ENCODE measurements at regions of chr19 and their contacts with region 1.

Region 1: DNA sequence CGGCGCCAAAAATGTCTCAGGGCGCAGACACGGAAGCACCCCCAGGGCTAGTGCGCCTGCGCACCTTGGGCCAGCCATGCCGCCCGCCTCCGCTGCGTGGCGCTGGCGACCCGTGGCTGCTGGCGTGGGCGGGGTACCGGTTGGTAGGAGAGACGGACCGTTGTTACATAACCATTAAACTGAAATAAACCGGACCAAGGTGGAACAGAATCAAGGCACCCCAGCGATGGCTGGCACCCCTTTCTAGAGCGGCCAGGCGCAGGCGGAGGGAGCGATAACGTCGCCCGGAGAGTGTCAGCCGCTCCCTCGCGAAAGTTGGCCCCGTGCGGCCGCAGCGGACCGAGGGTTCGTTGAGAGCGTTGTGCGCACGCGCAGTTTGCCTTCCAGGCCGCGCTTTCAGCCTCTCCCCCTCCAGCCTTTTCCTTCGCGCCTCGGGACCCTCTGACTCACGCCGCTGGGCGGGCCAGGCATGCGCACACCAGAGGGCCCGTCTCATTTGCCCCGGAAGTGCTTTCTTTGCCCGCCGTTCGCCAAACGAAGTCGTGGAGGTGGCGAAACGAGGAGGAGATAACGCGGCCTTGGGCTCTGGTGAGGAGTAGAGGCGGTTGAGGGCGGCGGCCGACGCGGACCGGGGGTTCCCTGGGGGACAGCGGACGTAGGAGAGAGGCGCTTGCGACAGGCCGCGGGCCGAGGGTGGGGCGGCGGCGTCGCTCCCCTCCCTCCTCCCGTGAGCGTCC is at the starts of genes PLEKHJ1 and SF3A2:
- DNase-seq: peak; percentile 99
- ATAC-seq: peak; percentile 87
- H3K4me3 Mint-ChIP-seq: peak within 1 kb of the TSS; percentile 94
- H3K27ac Mint-ChIP-seq: peak within 1 kb of the TSS; percentile 97
- H3K4me1 Mint-ChIP-seq: peaks cover 52% of the 10 kb centered on the region
- H3K27me3 Mint-ChIP-seq: no peaks in the 10 kb centered on the region
- total RNA-seq, gene PLEKHJ1: 38.4 to 61.8 TPM
- total RNA-seq, gene SF3A2: 146 to 192 TPM

Region 2: GRCh38 chr19:1406774-1407499 is 829.5 kb before region 1 on chr19:
- CTCF ChIA-PET with region 1: no interaction called
- POLR2A ChIA-PET with region 1: no interaction called
- intact Hi-C with region 1: loop called in 1 of 2 experiments (anchors 1 kb)
- DNase-seq: peak; percentile 99
- ATAC-seq: peak; percentile 83
- H3K4me3 Mint-ChIP-seq: peak overlapping the region; percentile 65
- H3K27ac Mint-ChIP-seq: peak overlapping the region; percentile 72
- H3K4me1 Mint-ChIP-seq: peaks cover 43% of the 10 kb centered on the region
- H3K27me3 Mint-ChIP-seq: peaks cover 2% of the 10 kb centered on the region

Region 3: DNA sequence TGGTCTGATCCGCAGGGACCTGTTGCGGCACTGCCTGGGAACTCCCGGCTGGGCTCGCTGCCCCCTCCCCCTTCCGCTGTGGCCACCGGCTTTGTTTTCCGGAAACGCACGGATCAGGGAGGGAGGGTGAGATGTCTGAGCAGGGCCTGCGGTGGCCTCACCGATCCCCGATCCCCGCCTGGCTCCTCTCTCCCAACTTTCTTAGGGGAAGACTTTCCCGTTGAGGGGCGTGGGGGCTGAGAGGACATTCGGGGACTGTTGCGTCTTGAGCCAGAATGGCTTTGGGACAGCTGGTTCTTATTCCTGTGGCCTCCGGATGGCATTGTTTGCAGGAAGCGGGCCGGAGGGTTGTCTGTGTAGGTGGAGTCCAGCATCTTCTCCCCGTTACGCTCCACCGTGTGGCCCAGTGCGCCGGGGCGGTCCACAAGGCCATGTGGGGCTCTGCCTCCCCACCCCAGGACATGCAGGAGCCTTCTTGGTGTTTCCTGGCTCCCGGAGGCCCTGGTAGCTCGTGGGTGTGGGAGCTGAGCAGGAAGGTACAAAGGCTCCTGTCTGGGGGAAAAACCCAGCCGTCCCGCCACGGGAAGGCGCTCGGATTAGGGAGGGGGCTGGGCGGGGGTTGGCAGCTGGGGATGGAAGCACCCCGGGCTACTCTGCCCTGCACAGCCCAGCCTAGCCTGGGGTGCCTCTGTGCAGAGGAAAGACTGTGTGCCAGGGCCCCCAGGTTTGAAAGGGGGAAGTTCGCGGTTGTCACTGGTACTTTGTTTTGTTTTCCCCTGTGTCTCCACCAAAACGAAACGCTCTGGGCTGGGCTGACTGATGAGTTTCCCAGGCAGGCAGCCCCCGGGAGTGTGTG is 294.2 kb before region 1 on chr19:
- CTCF ChIA-PET with region 1: interaction called, 3 read pairs
- POLR2A ChIA-PET with region 1: no interaction called
- intact Hi-C with region 1: loop called in 1 of 2 experiments (anchors 1 kb)
- DNase-seq: peak; percentile 85
- ATAC-seq: peak; percentile 50
- H3K4me3 Mint-ChIP-seq: peak overlapping the region; percentile 93
- H3K27ac Mint-ChIP-seq: peak overlapping the region; percentile 88
- H3K4me1 Mint-ChIP-seq: peaks cover 30% of the 10 kb centered on the region
- H3K27me3 Mint-ChIP-seq: no peaks in the 10 kb centered on the region

Region 4: GRCh38 chr19:2253106-2254053 is 16.9 kb after region 1 on chr19:
- CTCF ChIA-PET with region 1: interaction called, 52 read pairs
- POLR2A ChIA-PET with region 1: interaction called, 11 read pairs
- intact Hi-C with region 1: loop called (anchors 1 kb)
- DNase-seq: peak; percentile 69
- ATAC-seq: peak; percentile 23
- H3K4me3 Mint-ChIP-seq: peak overlapping the region; percentile 49
- H3K27ac Mint-ChIP-seq: no peak overlapping the region
- H3K4me1 Mint-ChIP-seq: peaks cover 24% of the 10 kb centered on the region
- H3K27me3 Mint-ChIP-seq: peaks cover 4% of the 10 kb centered on the region

Region 5: GRCh38 chr19:2391118-2391725 is 154.7 kb after region 1 on chr19:
- CTCF ChIA-PET with region 1: interaction called, 6 read pairs
- POLR2A ChIA-PET with region 1: no interaction called
- intact Hi-C with region 1: loop called (anchors 1 to 2 kb)
- DNase-seq: peak; percentile 57
- ATAC-seq: peak; percentile 80
- H3K4me3 Mint-ChIP-seq: no peak overlapping the region
- H3K27ac Mint-ChIP-seq: no peak overlapping the region
- H3K4me1 Mint-ChIP-seq: peaks cover 2% of the 10 kb centered on the region
- H3K27me3 Mint-ChIP-seq: peaks cover 2% of the 10 kb centered on the region

Region 6: GRCh38 chr19:2636897-2637683 is 400.6 kb after region 1 on chr19:
- CTCF ChIA-PET with region 1: no interaction called
- POLR2A ChIA-PET with region 1: no interaction called
- intact Hi-C with region 1: loop called in 1 of 2 experiments (anchors 1 kb)
- DNase-seq: peak; percentile 87
- ATAC-seq: peak; percentile 81
- H3K4me3 Mint-ChIP-seq: no peak overlapping the region
- H3K27ac Mint-ChIP-seq: no peak overlapping the region
- H3K4me1 Mint-ChIP-seq: peaks cover 12% of the 10 kb centered on the region
- H3K27me3 Mint-ChIP-seq: peaks cover 4% of the 10 kb centered on the region

Measured in activated CD4-positive, alpha-beta T cell treated with anti-CD3 and anti-CD28 coated beads for 36 hours (primary cell).